BJ (cell line): ENCODE measurements at regions of chr16 and their contacts with region 1.

Region 1: GRCh38 chr16:59701963-59702930 is 968.1 kb upstream of the GOT2 start:
- DNase-seq: no peak
- H3K4me3 ChIP-seq: no peak overlapping the region
- H3K27me3 ChIP-seq: no peaks in the 10 kb centered on the region
- CTCF ChIP-seq: no peak

Region 2: GRCh38 chr16:59558679-59559078 is 143.6 kb before region 1 on chr16:
- CTCF ChIA-PET with region 1: no interaction called
- POLR2A ChIA-PET with region 1: no interaction called
- DNase-seq: no peak
- H3K4me3 ChIP-seq: no peak overlapping the region
- H3K27me3 ChIP-seq: no peaks in the 10 kb centered on the region
- CTCF ChIP-seq: no peak

Region 3: DNA sequence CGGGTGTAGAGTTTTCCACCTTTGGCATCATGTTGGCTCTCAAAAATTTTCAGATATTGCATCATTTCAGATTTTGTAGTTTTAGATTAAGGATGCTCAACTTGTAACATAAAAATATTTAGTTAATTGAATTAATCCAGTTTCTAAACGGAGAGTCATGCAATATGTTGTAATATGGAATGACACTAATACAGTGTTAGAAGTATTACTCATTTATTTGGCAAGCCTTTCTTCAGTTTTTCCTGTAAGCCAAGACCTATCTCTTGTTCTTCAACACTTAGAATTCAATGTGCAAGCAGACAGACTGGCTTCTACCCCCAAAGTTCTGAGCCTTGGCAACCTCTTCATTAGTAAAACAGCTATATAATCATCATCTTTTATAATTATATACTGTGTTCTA is 16.9 kb after region 1 on chr16:
- CTCF ChIA-PET with region 1: interaction called, 3 read pairs
- POLR2A ChIA-PET with region 1: interaction called, 10 read pairs
- DNase-seq: no peak
- H3K4me3 ChIP-seq: no peak overlapping the region
- H3K27me3 ChIP-seq: no peaks in the 10 kb centered on the region
- CTCF ChIP-seq: no peak